GM10248 (cell line): ENCODE measurements at regions of chr16 and their contacts with region 1.

Region 1: GRCh38 chr16:81696961-81697615 is 82.0 kb upstream of the PLCG2 start:
- DNase-seq: peak; percentile 73
- CTCF ChIP-seq: peak; percentile 75

Region 2: DNA sequence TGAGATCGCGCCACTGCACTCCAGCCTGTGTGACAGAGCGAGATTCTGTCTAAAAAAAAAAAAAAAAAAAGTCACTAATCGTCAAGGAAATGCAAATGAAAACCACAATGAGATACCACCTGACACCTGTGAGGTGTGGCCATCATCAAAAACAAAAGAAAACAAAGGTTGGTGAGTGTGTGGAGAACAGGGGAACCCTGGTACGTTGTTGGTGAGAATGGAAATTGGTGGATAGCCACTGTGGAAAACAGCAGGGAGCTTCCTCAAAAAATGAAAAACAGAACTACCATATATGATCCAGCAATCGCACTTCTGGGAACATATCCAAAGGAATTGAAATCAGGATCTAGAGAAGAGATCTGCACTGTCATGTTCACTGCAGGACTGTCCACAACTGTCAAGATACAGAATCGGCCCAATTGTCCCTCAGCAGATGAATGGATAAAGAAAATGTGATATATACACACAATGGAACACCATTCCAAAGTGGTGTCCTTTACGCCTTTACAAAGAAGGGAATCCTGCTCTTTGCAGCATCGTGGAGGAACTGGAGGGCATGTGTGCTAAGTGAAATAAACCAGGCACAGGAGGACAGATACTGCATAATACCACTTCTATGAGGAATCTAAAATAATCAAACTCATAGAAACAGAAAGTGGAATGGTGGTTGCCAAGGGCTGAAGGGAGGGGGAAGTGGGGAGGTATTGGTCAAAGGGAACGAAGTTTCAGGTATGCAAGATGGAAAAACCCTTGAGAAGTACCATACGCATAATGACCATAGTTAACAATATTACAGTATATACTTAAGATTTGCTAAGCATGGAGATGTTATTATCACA is 18.5 kb after region 1 on chr16:
- CTCF ChIA-PET with region 1: interaction called, 12 read pairs
- POLR2A ChIA-PET with region 1: interaction called, 3 read pairs
- DNase-seq: no peak
- CTCF ChIP-seq: no peak

Region 3: GRCh38 chr16:82882982-82883835 is 1186.1 kb after region 1 on chr16:
- CTCF ChIA-PET with region 1: no interaction called
- POLR2A ChIA-PET with region 1: no interaction called
- DNase-seq: no peak
- CTCF ChIP-seq: no peak